ENCODE measurements at regions of chr20 and their contacts with region 1.

Region 1: GRCh38 chr20:17504898-17505635 is 26.1 kb downstream of the BFSP1 start:
- DNase-seq: peak; percentile 42 to 43
- H3K4me3 ChIP-seq: peak overlapping the region; percentile 54; the same call in 1 of the 2 replicates
- H3K27ac ChIP-seq: no peak overlapping the region
- H3K4me1 ChIP-seq: 0 out of 2 replicates have a peak, but pooled peaks cover 5% of the 10 kb centered on the region
- H3K27me3 ChIP-seq: no peaks in the 10 kb centered on the region
- CTCF ChIP-seq: peak; percentile 85

Region 2: DNA sequence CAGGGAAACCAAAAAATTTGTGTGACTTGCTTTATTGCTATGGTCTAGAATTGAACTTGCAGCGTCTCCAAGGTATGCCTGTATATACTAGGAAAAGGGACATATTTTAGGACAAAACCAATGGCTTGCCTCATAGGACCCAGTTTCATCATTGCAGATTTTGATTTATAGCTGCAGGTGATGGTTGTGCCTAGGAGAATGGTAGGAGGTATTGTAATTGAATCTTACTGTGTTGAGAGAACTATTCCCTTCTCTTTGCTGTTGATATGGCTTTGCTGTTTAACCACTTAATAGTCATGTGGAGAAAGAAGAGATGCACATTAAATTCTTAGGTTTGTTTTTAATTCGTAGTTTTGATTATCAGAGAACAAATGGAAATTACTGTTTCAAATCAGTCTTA is 81.2 kb after region 1 on chr20:
- CTCF ChIA-PET with region 1: no interaction called
- POLR2A ChIA-PET with region 1: no interaction called
- intact Hi-C with region 1: no loop called
- DNase-seq: no peak
- H3K4me3 ChIP-seq: no peak overlapping the region
- H3K27ac ChIP-seq: no peak overlapping the region
- H3K4me1 ChIP-seq: peaks cover 18% of the 10 kb centered on the region
- H3K27me3 ChIP-seq: no peaks in the 10 kb centered on the region
- CTCF ChIP-seq: no peak

Region 3: GRCh38 chr20:17617551-17618223 is 112.6 kb after region 1 on chr20:
- CTCF ChIA-PET with region 1: no interaction called
- POLR2A ChIA-PET with region 1: no interaction called
- intact Hi-C with region 1: loop called (anchors 1 kb)
- DNase-seq: peak in 1 of 2 experiments; percentile 55
- H3K4me3 ChIP-seq: no peak overlapping the region
- H3K27ac ChIP-seq: no peak overlapping the region
- H3K4me1 ChIP-seq: no peaks in the 10 kb centered on the region
- H3K27me3 ChIP-seq: no peaks in the 10 kb centered on the region
- CTCF ChIP-seq: peak; percentile 82

Region 4: DNA sequence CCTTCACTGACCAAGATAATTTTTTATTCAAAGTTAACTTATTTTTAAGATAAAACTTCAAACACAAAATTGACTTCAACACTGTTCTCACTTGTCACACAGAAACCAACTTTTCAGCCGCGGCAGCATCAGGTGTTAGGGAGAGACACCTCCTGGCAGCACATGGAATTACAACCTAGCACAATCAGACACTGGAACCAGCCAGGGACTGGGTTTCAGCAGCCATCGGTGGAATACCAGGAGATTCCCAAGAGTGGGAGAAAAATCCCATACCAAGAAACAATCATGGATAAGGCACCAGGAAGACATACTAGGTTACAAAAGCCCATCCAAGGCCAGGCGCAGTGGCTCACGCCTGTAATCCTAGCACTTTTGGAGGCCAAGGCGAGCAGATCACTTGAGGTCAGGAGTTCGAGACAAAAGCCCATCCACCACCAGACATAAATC is 393.5 kb after region 1 on chr20:
- CTCF ChIA-PET with region 1: no interaction called
- POLR2A ChIA-PET with region 1: no interaction called
- intact Hi-C with region 1: loop called (anchors 1 kb)
- DNase-seq: peak; percentile 33 to 65
- H3K4me3 ChIP-seq: no peak overlapping the region
- H3K27ac ChIP-seq: no peak overlapping the region
- H3K4me1 ChIP-seq: no peaks in the 10 kb centered on the region
- H3K27me3 ChIP-seq: no peaks in the 10 kb centered on the region
- CTCF ChIP-seq: peak; percentile 96

Region 5: DNA sequence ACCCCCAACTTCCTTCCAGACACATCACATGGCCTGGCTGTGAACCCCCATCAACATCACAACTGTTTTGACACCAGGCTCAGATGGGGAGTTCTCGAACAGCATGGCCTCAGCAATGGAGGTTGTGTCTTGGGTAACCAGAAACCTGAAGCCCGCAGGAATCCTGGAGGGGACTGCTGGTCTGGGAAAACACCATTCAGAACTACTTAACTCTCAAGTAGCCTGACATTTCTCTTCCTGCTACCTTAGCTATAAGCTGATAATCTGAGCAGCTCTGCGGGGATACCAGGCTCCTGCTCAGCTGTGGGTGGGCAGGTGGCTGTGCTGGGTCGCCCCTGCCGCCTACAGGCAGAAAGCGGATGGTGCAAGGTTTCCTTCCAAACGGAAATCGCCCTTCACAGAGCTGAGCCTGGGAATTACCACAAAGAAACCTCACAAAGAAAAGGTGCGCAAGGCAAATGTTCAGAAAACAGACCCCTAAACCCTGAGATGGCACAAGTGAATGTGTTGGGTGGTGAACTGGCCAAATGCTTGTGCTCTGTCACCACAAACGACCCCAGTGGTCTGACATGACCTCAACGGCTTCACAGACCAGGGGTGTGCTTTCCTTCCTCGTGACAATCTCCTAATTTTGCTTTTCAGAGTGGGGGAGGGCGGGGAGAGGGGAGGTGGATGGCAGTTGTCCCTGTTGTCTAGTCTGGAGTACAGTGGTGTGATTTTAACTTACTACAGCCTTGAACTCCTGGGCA is 434.0 kb after region 1 on chr20:
- CTCF ChIA-PET with region 1: no interaction called
- POLR2A ChIA-PET with region 1: no interaction called
- intact Hi-C with region 1: loop called (anchors 1 kb)
- DNase-seq: peak in 1 of 2 experiments; percentile 70
- H3K4me3 ChIP-seq: no peak overlapping the region
- H3K27ac ChIP-seq: no peak overlapping the region
- H3K4me1 ChIP-seq: no peaks in the 10 kb centered on the region
- H3K27me3 ChIP-seq: no peaks in the 10 kb centered on the region
- CTCF ChIP-seq: peak; percentile 82

Region 6: GRCh38 chr20:17995967-17996819 is 491.1 kb after region 1 on chr20:
- CTCF ChIA-PET with region 1: no interaction called
- POLR2A ChIA-PET with region 1: no interaction called
- intact Hi-C with region 1: loop called (anchors 2 kb)
- DNase-seq: peak in 1 of 2 experiments; percentile 41
- H3K4me3 ChIP-seq: no peak overlapping the region
- H3K27ac ChIP-seq: no peak overlapping the region
- H3K4me1 ChIP-seq: peaks cover 5% of the 10 kb centered on the region
- H3K27me3 ChIP-seq: no peaks in the 10 kb centered on the region
- CTCF ChIP-seq: peak; percentile 88